GM10248 (cell line): ENCODE measurements at regions of chr1 and their contacts with region 1.

Region 1: DNA sequence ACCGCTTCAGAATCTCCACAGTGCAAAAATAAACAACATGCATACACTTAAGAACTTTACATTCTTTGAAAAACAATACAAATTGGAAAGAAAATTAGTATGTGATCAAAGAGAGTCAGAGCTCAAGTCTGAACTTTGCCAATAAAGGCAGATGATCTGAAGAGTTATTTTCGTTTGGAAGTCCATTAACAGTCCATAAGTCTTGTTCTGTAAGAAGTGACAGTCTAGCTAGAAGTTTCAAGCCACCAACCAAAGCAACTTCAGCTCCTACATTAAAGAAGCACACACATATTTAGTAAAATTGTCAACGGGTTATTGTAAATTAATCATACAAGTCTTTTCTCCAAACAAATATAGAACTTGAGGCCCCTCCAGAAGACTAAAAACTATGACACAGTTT is 20.7 kb downstream of the ANGEL2 start:
- DNase-seq: no peak
- CTCF ChIP-seq: no peak

Region 2: DNA sequence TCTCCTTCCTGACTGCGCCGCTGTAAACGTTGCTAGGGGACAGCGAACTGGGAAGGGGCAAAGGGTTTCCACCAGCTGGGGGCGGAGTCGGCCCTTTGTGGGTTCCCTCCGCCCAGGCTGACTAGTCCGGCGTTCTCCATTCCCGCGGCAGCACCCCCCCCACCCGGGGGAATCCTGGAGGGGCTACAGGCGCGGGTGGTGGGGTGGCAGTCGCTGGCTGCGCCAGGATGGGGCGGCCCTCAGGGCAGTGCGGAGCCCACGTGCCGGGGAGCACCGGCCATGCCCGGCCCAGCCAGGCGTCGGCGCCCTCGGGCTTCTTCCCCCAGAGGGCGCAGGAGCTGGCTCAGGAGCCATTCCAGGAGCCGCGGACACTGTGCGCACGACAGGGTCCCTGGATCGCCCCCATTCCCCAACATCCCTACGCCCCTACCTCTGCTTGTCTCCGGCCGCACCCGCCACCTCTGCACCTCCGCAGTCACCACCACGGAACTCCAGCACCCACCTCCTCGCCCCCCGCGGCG is 295.8 kb before region 1 on chr1:
- CTCF ChIA-PET with region 1: interaction called, 12 read pairs
- POLR2A ChIA-PET with region 1: no interaction called
- DNase-seq: peak; percentile 79
- CTCF ChIP-seq: peak; percentile 69

Region 3: DNA sequence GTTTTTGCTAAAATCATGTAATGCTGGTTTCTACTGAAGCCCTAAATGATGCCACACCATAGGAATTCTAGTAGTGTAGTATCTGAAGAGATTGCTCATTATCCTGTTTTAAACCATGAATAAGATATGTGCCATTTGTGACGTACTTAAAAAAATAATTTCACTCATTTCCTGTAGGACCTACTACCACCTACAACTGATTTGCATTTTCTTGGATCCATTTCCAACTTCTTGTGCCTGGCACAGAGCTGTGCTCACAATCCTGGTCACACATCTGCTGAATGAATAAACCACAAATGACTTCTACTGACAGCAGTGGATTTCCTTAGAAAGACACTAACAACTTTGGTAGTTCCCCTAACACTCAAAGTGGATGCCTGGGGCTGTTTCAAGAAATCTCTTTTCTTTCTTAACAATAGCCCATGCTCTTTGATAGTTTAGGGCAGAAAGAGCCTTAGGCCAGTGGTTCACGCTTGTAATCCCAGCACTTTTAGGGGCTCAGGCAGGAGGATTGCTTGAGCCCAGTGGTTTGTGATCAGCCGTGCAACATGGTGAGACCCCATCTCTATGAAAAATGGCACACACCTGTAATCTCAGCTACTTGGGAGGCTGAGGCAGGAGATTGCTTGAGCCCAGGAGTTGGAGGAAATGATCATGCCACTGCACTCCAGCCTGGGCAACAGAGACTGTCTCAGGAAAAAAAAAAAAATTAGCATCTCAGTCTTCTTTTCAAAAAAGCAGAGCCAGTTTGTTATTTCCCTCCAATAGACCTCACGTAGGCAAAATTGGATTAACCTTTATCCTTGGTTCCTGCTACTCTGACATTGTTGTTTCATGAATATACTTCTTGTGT is 282.2 kb before region 1 on chr1:
- CTCF ChIA-PET with region 1: no interaction called
- POLR2A ChIA-PET with region 1: no interaction called
- DNase-seq: no peak
- CTCF ChIP-seq: no peak

Region 4: DNA sequence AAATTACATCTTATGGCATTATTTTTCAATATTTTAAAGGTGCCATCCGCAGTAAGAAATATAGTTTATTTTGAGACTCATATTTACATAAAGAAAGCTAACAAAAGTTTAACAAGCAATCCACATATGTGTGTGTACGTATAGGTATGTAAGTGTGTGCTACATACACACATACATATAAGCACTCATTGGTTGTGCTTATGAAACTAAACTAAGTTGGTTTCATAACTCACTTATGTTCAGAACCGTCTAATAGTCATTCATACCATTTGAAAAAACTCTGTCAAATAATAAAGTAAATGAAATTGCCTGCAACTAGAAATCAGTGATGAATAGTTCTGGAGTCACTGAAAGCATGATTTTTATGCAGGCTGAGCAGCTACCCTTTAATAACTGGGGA is 189.2 kb before region 1 on chr1:
- CTCF ChIA-PET with region 1: interaction called, 15 read pairs
- POLR2A ChIA-PET with region 1: no interaction called
- DNase-seq: no peak
- CTCF ChIP-seq: no peak

Region 5: DNA sequence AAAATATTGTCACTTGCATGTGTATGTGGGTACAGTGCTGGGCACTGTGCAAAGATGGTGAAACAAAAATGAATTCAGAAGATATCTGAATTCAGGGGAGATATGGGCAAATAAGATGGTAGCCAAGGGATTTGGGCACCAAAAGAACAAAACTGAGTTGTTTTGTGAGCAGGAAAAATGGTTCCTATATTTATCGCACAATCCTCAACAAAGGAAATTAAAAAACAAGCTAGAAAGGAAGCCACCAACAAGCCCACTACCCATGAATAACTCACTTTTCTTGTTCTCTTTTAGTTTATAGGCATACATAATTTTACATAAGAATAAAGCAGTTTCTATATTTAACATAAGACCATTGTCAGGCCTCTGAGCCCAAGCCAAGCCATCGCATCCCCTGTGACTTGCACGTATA is 85.3 kb before region 1 on chr1:
- CTCF ChIA-PET with region 1: no interaction called
- POLR2A ChIA-PET with region 1: no interaction called
- DNase-seq: no peak
- CTCF ChIP-seq: no peak

Region 6: DNA sequence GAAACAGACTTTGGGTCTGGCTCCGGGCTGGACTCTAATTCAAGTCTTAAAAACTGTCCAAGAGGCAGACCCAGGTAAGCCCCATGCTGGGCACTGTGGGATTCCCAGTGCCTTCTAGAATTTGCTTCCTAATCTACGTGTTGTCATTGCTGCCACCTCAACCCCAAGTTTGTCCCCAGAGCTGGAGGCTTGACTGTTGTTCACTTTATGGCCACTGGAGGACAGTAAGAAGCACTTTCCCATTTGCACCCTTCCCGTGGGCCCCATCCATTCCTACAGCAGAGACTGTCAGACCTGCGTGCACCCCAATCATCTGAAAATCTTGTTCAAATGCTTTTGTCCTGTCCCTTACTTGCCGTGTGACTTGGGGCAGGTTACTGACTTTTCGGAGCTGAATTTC is 74.0 kb before region 1 on chr1:
- CTCF ChIA-PET with region 1: interaction called, 13 read pairs
- POLR2A ChIA-PET with region 1: no interaction called
- DNase-seq: peak; percentile 57
- CTCF ChIP-seq: peak; percentile 42

Region 7: DNA sequence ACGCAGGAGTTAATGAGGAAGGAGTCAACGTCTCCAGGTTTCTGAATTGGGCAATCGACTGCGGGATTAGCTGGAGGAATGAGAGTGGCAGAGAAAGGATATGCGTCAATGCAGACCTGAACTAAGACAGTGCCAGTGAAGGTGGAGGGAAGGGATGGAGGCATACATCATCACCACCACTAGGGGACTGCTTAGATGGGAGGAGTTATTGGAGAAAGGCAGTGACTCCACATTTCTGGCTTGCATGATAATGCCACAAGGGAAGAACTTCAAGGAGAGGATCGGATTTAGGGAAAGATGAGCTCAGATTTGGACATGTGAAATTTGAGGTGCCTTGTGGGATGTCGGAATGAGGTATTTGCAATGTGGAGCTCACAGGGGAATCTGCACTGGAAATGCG is 27.1 kb before region 1 on chr1:
- CTCF ChIA-PET with region 1: interaction called, 36 read pairs
- POLR2A ChIA-PET with region 1: no interaction called
- DNase-seq: no peak
- CTCF ChIP-seq: no peak

Region 8: GRCh38 chr1:213041443-213041842 is 46.5 kb after region 1 on chr1:
- CTCF ChIA-PET with region 1: no interaction called
- POLR2A ChIA-PET with region 1: no interaction called
- DNase-seq: no peak
- CTCF ChIP-seq: no peak